ENCODE measurements at regions of chr10 and their contacts with region 1.

Region 1: GRCh38 chr10:16063350-16063749 is 203.0 kb upstream of the MINDY3 start:
- DNase-seq: no peak
- H3K4me3 ChIP-seq: no peak overlapping the region
- H3K27ac ChIP-seq: no peak overlapping the region
- H3K4me1 ChIP-seq: no peaks in the 10 kb centered on the region
- H3K27me3 ChIP-seq: no peaks in the 10 kb centered on the region
- CTCF ChIP-seq: no peak

Region 2: DNA sequence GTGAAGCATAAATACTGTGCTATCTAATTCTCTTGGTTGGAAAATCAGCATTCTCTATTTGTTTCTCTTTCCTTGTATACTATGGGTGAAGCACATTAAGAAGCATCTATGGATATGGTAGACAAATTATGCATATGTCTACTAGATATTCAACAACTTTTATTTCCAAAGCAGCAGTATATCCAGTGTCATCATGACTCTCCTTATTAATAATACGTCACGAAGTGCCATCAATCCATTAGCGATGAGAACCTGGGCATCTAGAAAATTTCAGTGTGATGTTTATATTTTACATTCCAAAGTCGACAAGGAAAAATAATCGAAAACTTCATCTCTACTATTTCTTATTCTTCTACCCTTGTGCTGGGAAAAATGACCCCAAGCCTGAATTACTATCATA is 38.2 kb before region 1 on chr10:
- CTCF ChIA-PET with region 1: no interaction called
- dilution Hi-C with region 1: loop called (anchors 5 kb)
- in situ Hi-C with region 1: no loop called
- intact Hi-C with region 1: no loop called
- DNase-seq: no peak
- H3K4me3 ChIP-seq: no peak overlapping the region
- H3K27ac ChIP-seq: no peak overlapping the region
- H3K4me1 ChIP-seq: no peaks in the 10 kb centered on the region
- H3K27me3 ChIP-seq: no peaks in the 10 kb centered on the region
- CTCF ChIP-seq: no peak